Posterior vena cava (tissue), 2 donors: ENCODE measurements at regions of chr2 and their contacts with region 1.

Region 1: GRCh38 chr2:140695163-140695562 is 1435.7 kb downstream of the LRP1B start:
- DNase-seq: no peak

Region 2: DNA sequence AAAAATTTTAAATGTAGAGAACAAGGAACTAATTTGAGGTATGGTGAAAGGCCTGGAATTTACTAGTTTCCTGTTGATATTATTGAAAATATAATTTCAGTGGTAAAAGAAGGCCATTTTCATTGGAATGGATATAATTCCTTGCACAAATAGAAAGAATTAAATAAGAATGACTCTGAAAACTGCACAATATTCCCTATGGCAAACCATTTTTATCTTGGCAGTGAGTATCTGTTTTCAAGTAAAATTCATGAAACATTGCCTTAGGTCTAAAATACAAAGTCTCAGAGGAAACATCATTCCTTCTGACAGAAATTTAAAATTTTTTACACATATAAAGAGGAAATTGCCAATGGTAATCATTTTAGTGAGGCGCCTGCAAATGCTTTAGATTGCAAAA is 32.7 kb before region 1 on chr2:
- intact Hi-C with region 1: loop called in 1 of 2 experiments (anchors 5 kb)
- DNase-seq: no peak

Region 3: GRCh38 chr2:141271346-141271745 is 576.2 kb after region 1 on chr2:
- intact Hi-C with region 1: no loop called
- DNase-seq: no peak